Activated T-helper 1 cell treated with anti-CD3 and anti-CD28 coated beads, Interleukin-12 subunit alpha, Interleukin-12 subunit beta, Interleukin-2, Interleukin-4 antibody, amounts not matched to agents 30 ng/mL and 10 ng/mL and 1 ng/mL, durations not matched to agents 14 hours and 24 hours and 36 hours (primary cell): ENCODE measurements at regions of chr6 and their contacts with region 1.

Region 1: GRCh38 chr6:149190224-149190831 is 127.2 kb upstream of the TAB2 start:
- DNase-seq: no peak
- H3K4me3 Mint-ChIP-seq: no peak overlapping the region
- H3K27ac Mint-ChIP-seq: no peak overlapping the region
- H3K4me1 Mint-ChIP-seq: peaks cover 30% of the 10 kb centered on the region
- H3K27me3 Mint-ChIP-seq: no peaks in the 10 kb centered on the region

Region 2: DNA sequence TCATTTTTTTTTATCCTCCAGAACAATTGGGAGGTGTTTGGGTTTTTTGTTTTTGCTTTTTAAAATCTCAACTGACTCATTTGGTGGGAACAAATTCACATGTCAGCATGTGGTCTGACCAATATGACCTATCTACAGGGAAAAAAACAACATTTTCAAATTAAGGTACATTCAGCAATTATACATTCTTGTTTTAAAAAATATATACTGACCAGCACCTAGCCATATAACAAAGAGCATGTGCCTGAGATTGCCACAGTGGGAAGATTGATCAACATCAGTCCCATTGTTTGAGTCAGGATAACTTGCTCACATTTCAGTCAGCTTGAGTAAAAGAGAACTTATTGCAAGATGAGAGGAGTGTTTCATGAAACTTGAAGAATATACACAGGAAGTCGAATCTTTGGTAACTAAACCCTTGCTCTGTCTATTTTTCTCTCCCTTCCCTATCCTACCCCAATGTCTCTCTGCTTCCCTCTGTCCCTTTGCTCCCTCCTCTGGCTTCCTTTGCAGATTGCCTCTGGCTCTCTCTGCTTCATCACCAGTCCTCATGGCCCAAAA is 36.0 kb before region 1 on chr6:
- intact Hi-C with region 1: no loop called
- DNase-seq: no peak
- H3K4me3 Mint-ChIP-seq: peak overlapping the region; percentile 21
- H3K27ac Mint-ChIP-seq: peak overlapping the region; percentile 99
- H3K4me1 Mint-ChIP-seq: peaks cover 84% of the 10 kb centered on the region
- H3K27me3 Mint-ChIP-seq: no peaks in the 10 kb centered on the region

Region 3: GRCh38 chr6:149242883-149243282 is 52.6 kb after region 1 on chr6:
- intact Hi-C with region 1: loop called (anchors 5 kb)
- DNase-seq: no peak
- H3K4me3 Mint-ChIP-seq: no peak overlapping the region
- H3K27ac Mint-ChIP-seq: no peak overlapping the region
- H3K4me1 Mint-ChIP-seq: peaks cover 38% of the 10 kb centered on the region
- H3K27me3 Mint-ChIP-seq: no peaks in the 10 kb centered on the region

Region 4: DNA sequence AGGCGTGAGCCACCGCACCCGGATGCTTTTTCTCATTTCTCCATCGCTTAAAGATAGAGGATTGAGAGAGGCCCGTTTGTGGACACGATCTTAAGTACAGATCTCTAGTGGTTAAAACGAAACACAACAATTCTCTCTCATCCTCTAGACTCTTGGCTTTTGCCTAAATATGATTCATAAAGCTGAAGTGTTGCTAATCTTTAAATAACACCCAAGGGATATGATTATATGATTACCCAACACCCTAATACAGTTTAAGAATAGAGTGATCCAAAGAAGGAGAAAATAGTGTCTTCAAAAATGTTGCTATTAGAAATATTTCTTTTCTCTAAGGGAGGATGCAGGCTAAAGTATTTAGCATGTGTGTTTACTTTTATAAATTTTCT is 1725.5 kb after region 1 on chr6:
- intact Hi-C with region 1: no loop called
- DNase-seq: no peak
- H3K4me3 Mint-ChIP-seq: no peak overlapping the region
- H3K27ac Mint-ChIP-seq: no peak overlapping the region
- H3K4me1 Mint-ChIP-seq: no peaks in the 10 kb centered on the region
- H3K27me3 Mint-ChIP-seq: no peaks in the 10 kb centered on the region